ENCODE measurements at regions of chr2 and their contacts with region 1.

Region 1: DNA sequence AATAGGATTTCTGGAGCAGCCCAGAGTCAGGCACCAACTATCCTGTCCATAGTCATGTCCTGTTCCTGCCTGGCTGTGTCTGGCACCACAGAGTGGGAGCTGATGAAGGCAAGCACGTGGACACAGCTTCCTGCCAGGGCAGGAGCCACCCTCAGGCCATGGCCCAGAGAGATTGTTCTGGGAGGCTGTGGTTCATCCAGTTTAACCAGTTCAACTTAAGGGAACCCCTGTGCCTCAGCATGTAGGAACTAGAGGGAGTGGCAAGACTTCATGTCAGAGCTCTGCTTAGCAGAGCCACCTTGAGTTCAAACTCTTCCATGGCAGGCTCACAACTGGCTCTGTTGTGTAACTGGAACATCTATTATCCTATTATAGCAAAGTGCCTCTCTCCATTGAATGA is 73.2 kb upstream of the NCKAP5 start:
- DNase-seq: peak; percentile 81
- H3K4me3 Mint-ChIP-seq: no peak overlapping the region
- H3K27ac Mint-ChIP-seq: peak overlapping the region; percentile 46
- H3K4me1 Mint-ChIP-seq: peaks cover 28% of the 10 kb centered on the region
- H3K27me3 Mint-ChIP-seq: no peaks in the 10 kb centered on the region
- CTCF ChIP-seq: peak; percentile 21

Region 2: GRCh38 chr2:133266041-133266925 is 375.2 kb before region 1 on chr2:
- CTCF ChIA-PET with region 1: no interaction called
- intact Hi-C with region 1: loop called (anchors 10 kb)
- DNase-seq: peak; percentile 15
- H3K4me3 Mint-ChIP-seq: peak overlapping the region; percentile 83
- H3K27ac Mint-ChIP-seq: peak overlapping the region; percentile 60
- H3K4me1 Mint-ChIP-seq: peaks cover 24% of the 10 kb centered on the region
- H3K27me3 Mint-ChIP-seq: peaks cover 22% of the 10 kb centered on the region
- CTCF ChIP-seq: no peak

Region 3: GRCh38 chr2:133434962-133435668 is 206.4 kb before region 1 on chr2:
- CTCF ChIA-PET with region 1: no interaction called
- intact Hi-C with region 1: loop called (anchors 10 kb)
- DNase-seq: peak; percentile 62
- H3K4me3 Mint-ChIP-seq: no peak overlapping the region
- H3K27ac Mint-ChIP-seq: no peak overlapping the region
- H3K4me1 Mint-ChIP-seq: peaks cover 19% of the 10 kb centered on the region
- H3K27me3 Mint-ChIP-seq: no peaks in the 10 kb centered on the region
- CTCF ChIP-seq: no peak

Region 4: GRCh38 chr2:133517876-133518275 is 123.6 kb before region 1 on chr2:
- CTCF ChIA-PET with region 1: interaction called, 10 read pairs
- intact Hi-C with region 1: no loop called
- DNase-seq: no peak
- H3K4me3 Mint-ChIP-seq: no peak overlapping the region
- H3K27ac Mint-ChIP-seq: no peak overlapping the region
- H3K4me1 Mint-ChIP-seq: no peaks in the 10 kb centered on the region
- H3K27me3 Mint-ChIP-seq: peaks cover 7% of the 10 kb centered on the region
- CTCF ChIP-seq: no peak

Region 5: DNA sequence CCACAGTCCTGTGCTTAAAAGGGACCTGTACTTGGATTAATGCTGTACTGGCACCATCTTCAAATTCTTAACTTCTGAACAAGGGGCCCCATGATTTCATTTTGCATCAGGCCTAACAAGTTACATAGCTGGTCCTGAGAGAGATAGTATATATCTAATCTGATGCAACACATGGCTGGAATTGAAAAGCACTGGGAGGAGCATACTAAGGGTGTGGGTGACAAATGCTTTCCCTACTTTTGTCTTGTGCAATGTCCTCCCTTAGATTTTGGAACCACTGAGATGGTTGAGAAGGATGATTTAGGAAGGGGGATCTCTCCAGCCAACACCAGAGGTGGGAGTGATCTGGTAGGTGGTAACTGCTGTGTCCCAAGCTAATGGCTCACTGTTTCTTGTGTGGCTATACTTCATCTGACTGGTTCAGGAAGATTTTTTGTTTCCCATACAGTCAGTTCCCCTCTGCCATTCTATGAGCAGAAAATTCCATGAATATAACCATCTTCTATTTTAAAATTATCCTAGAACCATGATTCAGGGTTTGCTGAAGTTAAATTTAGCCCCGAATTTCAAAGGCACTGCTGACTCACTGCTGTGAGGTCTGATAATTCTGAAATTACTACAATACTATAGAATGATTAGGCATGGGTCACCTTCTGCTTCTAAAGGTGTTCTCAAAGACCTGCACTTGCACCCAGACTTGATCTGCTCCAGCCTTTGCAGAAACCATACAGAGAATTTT is 35.1 kb after region 1 on chr2:
- CTCF ChIA-PET with region 1: no interaction called
- intact Hi-C with region 1: no loop called
- DNase-seq: no peak
- H3K4me3 Mint-ChIP-seq: no peak overlapping the region
- H3K27ac Mint-ChIP-seq: no peak overlapping the region
- H3K4me1 Mint-ChIP-seq: peaks cover 31% of the 10 kb centered on the region
- H3K27me3 Mint-ChIP-seq: no peaks in the 10 kb centered on the region
- CTCF ChIP-seq: no peak

Measured in Calu3 (cell line).